CD14-positive monocyte (primary cell): ENCODE measurements at regions of chr7 and their contacts with region 1.

Region 1: GRCh38 chr7:44847508-44847920 is 373 bp downstream of the H2AZ2 start:
- DNase-seq: peak; percentile 73 to 82 (median 82)
- H3K4me3 ChIP-seq: peak overlapping the region; percentile 79 to 98 (median 89)
- H3K4me3 Mint-ChIP-seq: peak overlapping the region; percentile 91 to 98
- H3K27ac ChIP-seq: peak overlapping the region; percentile 88 to 92
- H3K27ac Mint-ChIP-seq: peak overlapping the region; percentile 95 to 99 (median 98)
- H3K4me1 ChIP-seq: peaks cover 36 to 53% of the 10 kb centered on the region in 2 donors
- H3K4me1 Mint-ChIP-seq: peaks cover 48% of the 10 kb centered on the region
- H3K27me3 ChIP-seq: no peaks in the 10 kb centered on the region
- H3K27me3 Mint-ChIP-seq: no peaks in the 10 kb centered on the region
- CTCF ChIP-seq: peak; percentile 93

Region 2: GRCh38 chr7:44044315-44045225 is 802.9 kb before region 1 on chr7 and contains the start of gene DBNL:
- intact Hi-C with region 1: loop called in 1 of 2 experiments (anchors 10 kb)
- DNase-seq: peak; percentile 90 to 92 (median 91)
- H3K4me3 ChIP-seq: peak within 1 kb of the TSS; percentile 58 to 80 (median 72)
- H3K4me3 Mint-ChIP-seq: peak within 1 kb of the TSS; percentile 84 to 90
- H3K27ac ChIP-seq: peak within 1 kb of the TSS; percentile 94 to 97
- H3K27ac Mint-ChIP-seq: peak within 1 kb of the TSS; percentile 99 to 100 (median 99)
- H3K4me1 ChIP-seq: peaks cover 53 to 67% of the 10 kb centered on the region in 2 donors
- H3K4me1 Mint-ChIP-seq: peaks cover 44% of the 10 kb centered on the region
- H3K27me3 ChIP-seq: no peaks in the 10 kb centered on the region
- H3K27me3 Mint-ChIP-seq: peaks cover 0 to 4% (median 0%) of the 10 kb centered on the region in 3 donors
- CTCF ChIP-seq: no peak
- polyA plus RNA-seq, gene DBNL: 228 to 321 (median 304) TPM

Region 3: GRCh38 chr7:44587843-44588711 is 259.4 kb before region 1 on chr7:
- intact Hi-C with region 1: loop called (anchors 5 kb)
- DNase-seq: peak; percentile 46 to 58 (median 55)
- H3K4me3 ChIP-seq: no peak overlapping the region
- H3K4me3 Mint-ChIP-seq: no peak overlapping the region
- H3K27ac ChIP-seq: no peak overlapping the region
- H3K27ac Mint-ChIP-seq: peak overlapping the region in 3 of 7 donors; percentile 21 to 26 (median 26)
- H3K4me1 ChIP-seq: peaks cover 2% of the 10 kb centered on the region in 2 donors
- H3K4me1 Mint-ChIP-seq: peaks cover 6% of the 10 kb centered on the region
- H3K27me3 ChIP-seq: no peaks in the 10 kb centered on the region
- H3K27me3 Mint-ChIP-seq: peaks cover 1 to 4% (median 3%) of the 10 kb centered on the region in 3 donors
- CTCF ChIP-seq: peak; percentile 81

Region 4: GRCh38 chr7:44748045-44748947 is 99.2 kb before region 1 on chr7 and contains the start of gene ZMIZ2:
- intact Hi-C with region 1: loop called (anchors 5 to 10 kb)
- DNase-seq: peak; percentile 81 to 89 (median 82)
- H3K4me3 ChIP-seq: peak within 1 kb of the TSS; percentile 83 to 98 (median 83)
- H3K4me3 Mint-ChIP-seq: peak within 1 kb of the TSS; percentile 86 to 93
- H3K27ac ChIP-seq: peak within 1 kb of the TSS; percentile 33 to 91
- H3K27ac Mint-ChIP-seq: peak within 1 kb of the TSS; percentile 59 to 94 (median 91)
- H3K4me1 ChIP-seq: peaks cover 31 to 34% of the 10 kb centered on the region in 2 donors
- H3K4me1 Mint-ChIP-seq: peaks cover 42% of the 10 kb centered on the region
- H3K27me3 ChIP-seq: no peaks in the 10 kb centered on the region
- H3K27me3 Mint-ChIP-seq: no peaks in the 10 kb centered on the region
- CTCF ChIP-seq: no peak
- polyA plus RNA-seq, gene ZMIZ2: 1.9 to 72.8 (median 3.3) TPM

Region 5: GRCh38 chr7:44885394-44886317 is 38.1 kb after region 1 on chr7 and contains the start of gene PURB:
- intact Hi-C with region 1: loop called in 1 of 2 experiments (anchors 5 kb)
- DNase-seq: peak; percentile 99 to 100 (median 99)
- H3K4me3 ChIP-seq: peak within 1 kb of the TSS; percentile 63 to 78 (median 76)
- H3K4me3 Mint-ChIP-seq: peak within 1 kb of the TSS; percentile 94 to 99
- H3K27ac ChIP-seq: peak within 1 kb of the TSS; percentile 98 to 99
- H3K27ac Mint-ChIP-seq: peak within 1 kb of the TSS; percentile 98 to 100 (median 100)
- H3K4me1 ChIP-seq: peaks cover 54 to 65% of the 10 kb centered on the region in 2 donors
- H3K4me1 Mint-ChIP-seq: peaks cover 62% of the 10 kb centered on the region
- H3K27me3 ChIP-seq: no peaks in the 10 kb centered on the region
- H3K27me3 Mint-ChIP-seq: peaks cover 0 to 7% (median 0%) of the 10 kb centered on the region in 3 donors
- CTCF ChIP-seq: no peak
- polyA plus RNA-seq, gene PURB: 3.0 to 13.0 (median 3.0) TPM